Posterior vena cava (tissue), 2 donors: ENCODE measurements at regions of chr1 and their contacts with region 1.

Region 1: GRCh38 chr1:204363335-204364124 is 3.8 kb upstream of the PLEKHA6 start:
- DNase-seq: peak; percentile 90

Region 2: GRCh38 chr1:203861379-203862184 is 501.9 kb before region 1 on chr1 and contains the start of gene SNRPE:
- intact Hi-C with region 1: loop called in 1 of 2 experiments (anchors 10 kb)
- DNase-seq: peak; percentile 99
- total RNA-seq, gene SNRPE: 72.3 to 79.5 TPM

Region 3: GRCh38 chr1:204162231-204163074 is 201.1 kb before region 1 on chr1:
- intact Hi-C with region 1: loop called in 1 of 2 experiments (anchors 2 kb)
- DNase-seq: peak; percentile 92

Region 4: DNA sequence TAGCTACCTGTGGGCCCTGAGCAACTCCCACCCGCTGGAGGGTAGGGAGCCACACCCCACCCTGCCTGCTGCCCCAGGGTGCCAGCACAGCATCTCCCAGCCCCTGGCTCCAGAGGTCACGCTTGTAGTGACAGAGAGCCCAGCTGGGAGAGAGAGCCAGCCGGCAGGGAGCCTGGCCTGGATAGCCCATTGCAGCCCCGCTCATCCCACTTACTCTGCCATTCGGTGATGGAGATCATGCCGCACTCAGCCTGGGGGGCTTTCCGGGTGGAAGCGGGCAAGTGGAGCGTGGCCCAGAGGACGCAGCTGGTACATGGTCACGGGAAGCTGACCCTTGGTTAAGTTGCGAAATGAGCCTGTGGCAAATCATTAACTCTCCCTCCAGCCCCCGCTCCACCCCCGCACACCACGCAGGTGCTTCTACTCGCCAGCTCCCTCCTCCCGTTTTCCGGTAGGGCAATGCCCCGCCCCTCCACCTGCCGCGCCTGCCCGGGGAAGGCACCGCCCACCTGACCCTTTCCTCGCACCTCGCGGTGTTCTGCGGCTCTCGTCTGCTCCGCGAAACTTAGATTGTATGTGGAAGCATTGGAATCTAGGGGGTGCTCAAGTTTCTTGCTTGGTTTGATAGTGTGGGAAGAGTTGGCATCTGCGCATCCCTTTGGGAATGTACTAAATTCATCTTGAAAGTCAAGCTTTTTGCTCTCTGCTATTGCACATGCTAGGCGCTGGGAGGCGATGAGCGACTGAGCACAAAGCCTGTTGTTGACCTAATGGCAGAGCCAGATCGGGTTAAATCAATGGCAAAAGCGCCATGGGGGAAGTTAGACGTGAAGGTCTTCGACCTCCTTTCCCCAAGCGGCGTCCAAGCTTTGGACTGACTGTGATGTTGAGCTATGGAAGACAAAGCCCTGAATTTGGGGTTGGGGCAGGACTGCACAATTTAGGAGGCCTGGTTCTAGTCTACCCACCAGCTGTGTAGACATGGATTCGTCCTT is 149.6 kb before region 1 on chr1 and contains the start of gene GOLT1A:
- intact Hi-C with region 1: loop called (anchors 2 to 5 kb)
- DNase-seq: peak; percentile 90
- total RNA-seq, gene GOLT1A: not detected

Region 5: GRCh38 chr1:204241050-204241449 is 122.5 kb before region 1 on chr1:
- intact Hi-C with region 1: loop called in 1 of 2 experiments (anchors 10 kb)
- DNase-seq: peak; percentile 20

Region 6: DNA sequence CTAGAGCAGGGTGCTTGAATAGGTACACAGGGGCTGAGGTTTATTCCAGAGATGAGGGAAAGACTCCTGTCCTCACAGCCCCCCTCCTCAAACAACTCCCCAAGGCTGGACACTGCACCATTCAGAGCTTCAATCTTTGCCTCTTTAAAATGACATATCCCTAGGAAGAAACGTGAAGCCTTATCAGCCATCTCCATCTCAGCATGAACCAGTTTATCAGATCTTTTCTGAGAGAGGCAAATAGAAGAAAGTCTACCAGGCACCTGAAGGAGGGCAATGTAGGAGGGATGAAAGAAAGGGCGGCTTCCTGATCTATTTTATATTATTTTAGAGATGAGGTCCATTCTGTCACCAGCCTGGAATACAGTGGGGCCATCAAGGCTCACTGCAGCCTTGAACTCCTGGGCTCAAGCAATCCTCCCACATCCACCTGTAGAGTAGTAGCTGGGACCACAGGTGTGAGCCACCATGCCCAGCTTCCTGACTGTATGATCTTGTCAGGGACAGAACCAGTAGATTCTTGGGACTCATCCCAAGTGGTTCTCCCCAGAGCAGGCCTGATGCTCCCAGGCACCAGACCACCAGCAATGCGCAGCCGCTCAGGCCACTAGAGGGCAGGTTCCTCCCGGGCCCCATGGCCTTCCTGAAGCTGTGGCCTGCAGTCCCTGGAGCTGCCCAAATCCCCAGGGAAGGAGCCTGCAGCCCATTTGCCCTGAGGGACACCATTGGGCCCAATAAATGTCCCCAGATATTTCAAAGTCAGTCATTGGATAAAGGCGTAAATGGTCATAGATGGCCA is 105.4 kb before region 1 on chr1:
- intact Hi-C with region 1: loop called in 1 of 2 experiments (anchors 2 kb)
- DNase-seq: no peak